ENCODE measurements at regions of chr19 and their contacts with region 1.

Region 1: GRCh38 chr19:55258828-55259539 is at the start of gene PPP6R1:
- DNase-seq: peak; percentile 100
- ATAC-seq: peak; percentile 78
- H3K4me3 ChIP-seq: peak within 1 kb of the TSS; percentile 95
- H3K27ac ChIP-seq: peak within 1 kb of the TSS; percentile 95
- H3K4me1 ChIP-seq: peaks cover 40% of the 10 kb centered on the region
- H3K27me3 ChIP-seq: no peaks in the 10 kb centered on the region
- CTCF ChIP-seq: no peak
- total RNA-seq, gene PPP6R1: 159 and 221 TPM in 2 replicates

Region 2: DNA sequence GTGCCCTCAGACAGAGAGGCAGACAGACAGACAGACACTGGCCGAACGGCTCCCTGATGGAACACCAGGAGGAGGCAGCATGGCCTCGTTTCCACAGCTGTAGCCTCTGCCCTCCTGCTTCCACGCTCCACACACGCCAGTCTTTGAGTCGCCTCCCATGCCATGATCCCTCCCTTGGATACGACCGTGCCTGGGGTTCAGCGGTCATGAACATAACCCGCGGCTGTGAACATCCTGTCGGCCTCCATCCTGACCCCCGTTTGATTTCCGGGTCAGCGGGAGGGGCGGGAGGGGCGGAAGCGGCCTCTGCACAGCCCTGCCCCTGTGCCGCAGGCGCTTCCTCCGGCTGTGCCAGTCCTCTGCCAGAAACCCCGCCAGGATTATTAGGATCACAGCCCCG is 244.3 kb before region 1 on chr19:
- CTCF ChIA-PET with region 1: no interaction called
- POLR2A ChIA-PET with region 1: no interaction called
- intact Hi-C with region 1: no loop called
- DNase-seq: peak; percentile 25
- ATAC-seq: peak; percentile 76
- H3K4me3 ChIP-seq: peak overlapping the region; percentile 40
- H3K27ac ChIP-seq: no peak overlapping the region
- H3K4me1 ChIP-seq: 0 out of 2 replicates have a peak, but pooled peaks cover 5% of the 10 kb centered on the region
- H3K27me3 ChIP-seq: peaks cover 13% of the 10 kb centered on the region; the same call in 1 of the 2 replicates
- CTCF ChIP-seq: no peak

Region 3: GRCh38 chr19:55279770-55280643 is 21.0 kb after region 1 on chr19 and contains the start of gene HSPBP1:
- CTCF ChIA-PET with region 1: interaction called, 7 read pairs
- POLR2A ChIA-PET with region 1: interaction called, 10 read pairs
- intact Hi-C with region 1: loop called (anchors 1 kb)
- DNase-seq: peak; percentile 98
- ATAC-seq: peak; percentile 91
- H3K4me3 ChIP-seq: peak within 1 kb of the TSS; percentile 96
- H3K27ac ChIP-seq: peak within 1 kb of the TSS; percentile 68
- H3K4me1 ChIP-seq: peaks cover 10% of the 10 kb centered on the region; the same call in 1 of the 2 replicates
- H3K27me3 ChIP-seq: 0 out of 2 replicates have a peak, but pooled peaks cover 4% of the 10 kb centered on the region
- CTCF ChIP-seq: no peak
- total RNA-seq, gene HSPBP1: 122 and 148 TPM in 2 replicates

Region 4: GRCh38 chr19:55319785-55320184 is 60.8 kb after region 1 on chr19:
- CTCF ChIA-PET with region 1: no interaction called
- POLR2A ChIA-PET with region 1: no interaction called
- intact Hi-C with region 1: no loop called
- DNase-seq: no peak
- ATAC-seq: peak; percentile 37; the same call in 1 of the 2 replicates
- H3K4me3 ChIP-seq: no peak overlapping the region
- H3K27ac ChIP-seq: no peak overlapping the region
- H3K4me1 ChIP-seq: no peaks in the 10 kb centered on the region
- H3K27me3 ChIP-seq: no peaks in the 10 kb centered on the region
- CTCF ChIP-seq: no peak

Region 5: GRCh38 chr19:55503502-55504251 is 244.7 kb after region 1 on chr19:
- CTCF ChIA-PET with region 1: no interaction called
- POLR2A ChIA-PET with region 1: no interaction called
- intact Hi-C with region 1: no loop called
- DNase-seq: peak; percentile 84
- ATAC-seq: peak; percentile 94
- H3K4me3 ChIP-seq: peak overlapping the region; percentile 51; the same call in 1 of the 2 replicates
- H3K27ac ChIP-seq: no peak overlapping the region
- H3K4me1 ChIP-seq: no peaks in the 10 kb centered on the region; the same call in 1 of the 2 replicates
- H3K27me3 ChIP-seq: no peaks in the 10 kb centered on the region
- CTCF ChIP-seq: peak; percentile 98

Measured in PC-3 (cell line).